Activated naive CD4-positive, alpha-beta T cell treated with anti-CD3 and anti-CD28 coated beads for 36 hours (primary cell): ENCODE measurements at regions of chr6 and their contacts with region 1.

Region 1: GRCh38 chr6:151702851-151703611 is 104.5 kb upstream of the ESR1 start:
- DNase-seq: no peak
- H3K4me3 Mint-ChIP-seq: no peak overlapping the region
- H3K27ac Mint-ChIP-seq: peak overlapping the region; percentile 12
- H3K4me1 Mint-ChIP-seq: peaks cover 45% of the 10 kb centered on the region
- H3K27me3 Mint-ChIP-seq: peaks cover 11% of the 10 kb centered on the region

Region 2: GRCh38 chr6:151681433-151682059 is 21.5 kb before region 1 on chr6:
- CTCF ChIA-PET with region 1: interaction called, 4 read pairs
- intact Hi-C with region 1: loop called (anchors 1 kb)
- DNase-seq: no peak
- H3K4me3 Mint-ChIP-seq: peak overlapping the region; percentile 5
- H3K27ac Mint-ChIP-seq: no peak overlapping the region
- H3K4me1 Mint-ChIP-seq: peaks cover 10% of the 10 kb centered on the region
- H3K27me3 Mint-ChIP-seq: peaks cover 12% of the 10 kb centered on the region

Region 3: GRCh38 chr6:151723152-151723551 is 20.1 kb after region 1 on chr6:
- CTCF ChIA-PET with region 1: interaction called, 3 read pairs
- intact Hi-C with region 1: loop called (anchors 1 kb)
- DNase-seq: peak; percentile 76
- H3K4me3 Mint-ChIP-seq: no peak overlapping the region
- H3K27ac Mint-ChIP-seq: no peak overlapping the region
- H3K4me1 Mint-ChIP-seq: peaks cover 29% of the 10 kb centered on the region
- H3K27me3 Mint-ChIP-seq: peaks cover 3% of the 10 kb centered on the region

Region 4: DNA sequence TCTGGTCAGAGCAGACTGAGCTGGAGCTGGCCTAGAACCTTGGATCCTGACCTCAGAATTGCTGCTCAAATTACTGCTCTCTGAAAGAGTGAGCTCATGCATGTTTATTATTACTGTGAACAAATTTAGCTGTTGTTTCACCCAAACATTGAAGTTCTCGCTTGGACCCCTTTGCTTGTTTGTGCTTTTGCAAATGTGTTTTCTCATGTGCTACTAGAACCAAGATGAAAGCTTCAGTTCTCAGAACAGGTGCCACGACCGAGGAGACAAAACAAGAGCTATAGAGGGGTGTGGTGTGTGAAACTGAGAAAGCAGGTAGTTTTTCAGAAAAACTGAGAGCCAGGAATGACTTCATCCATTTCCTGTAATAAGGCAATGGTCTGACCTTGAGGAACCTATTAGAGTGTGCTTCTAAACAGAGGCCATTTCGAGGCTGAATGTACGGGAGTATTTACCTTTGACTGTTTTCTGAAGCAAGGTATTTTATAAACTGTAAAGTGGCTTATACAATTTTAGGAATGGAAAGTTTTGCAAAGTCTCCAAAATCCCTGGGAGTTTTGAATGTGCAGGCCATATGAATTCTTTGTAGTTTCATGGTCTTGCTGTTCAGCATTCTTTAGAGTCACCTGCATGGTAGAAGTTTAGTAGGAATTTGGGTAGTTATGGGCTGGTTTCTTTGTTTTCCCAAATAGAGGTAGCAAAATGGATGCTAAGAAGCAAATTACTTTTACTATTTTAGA is 54.6 kb after region 1 on chr6:
- CTCF ChIA-PET with region 1: interaction called, 3 read pairs
- intact Hi-C with region 1: loop called (anchors 1 kb)
- DNase-seq: peak; percentile 67
- H3K4me3 Mint-ChIP-seq: peak overlapping the region; percentile 36
- H3K27ac Mint-ChIP-seq: peak overlapping the region; percentile 80
- H3K4me1 Mint-ChIP-seq: peaks cover 37% of the 10 kb centered on the region
- H3K27me3 Mint-ChIP-seq: no peaks in the 10 kb centered on the region

Region 5: DNA sequence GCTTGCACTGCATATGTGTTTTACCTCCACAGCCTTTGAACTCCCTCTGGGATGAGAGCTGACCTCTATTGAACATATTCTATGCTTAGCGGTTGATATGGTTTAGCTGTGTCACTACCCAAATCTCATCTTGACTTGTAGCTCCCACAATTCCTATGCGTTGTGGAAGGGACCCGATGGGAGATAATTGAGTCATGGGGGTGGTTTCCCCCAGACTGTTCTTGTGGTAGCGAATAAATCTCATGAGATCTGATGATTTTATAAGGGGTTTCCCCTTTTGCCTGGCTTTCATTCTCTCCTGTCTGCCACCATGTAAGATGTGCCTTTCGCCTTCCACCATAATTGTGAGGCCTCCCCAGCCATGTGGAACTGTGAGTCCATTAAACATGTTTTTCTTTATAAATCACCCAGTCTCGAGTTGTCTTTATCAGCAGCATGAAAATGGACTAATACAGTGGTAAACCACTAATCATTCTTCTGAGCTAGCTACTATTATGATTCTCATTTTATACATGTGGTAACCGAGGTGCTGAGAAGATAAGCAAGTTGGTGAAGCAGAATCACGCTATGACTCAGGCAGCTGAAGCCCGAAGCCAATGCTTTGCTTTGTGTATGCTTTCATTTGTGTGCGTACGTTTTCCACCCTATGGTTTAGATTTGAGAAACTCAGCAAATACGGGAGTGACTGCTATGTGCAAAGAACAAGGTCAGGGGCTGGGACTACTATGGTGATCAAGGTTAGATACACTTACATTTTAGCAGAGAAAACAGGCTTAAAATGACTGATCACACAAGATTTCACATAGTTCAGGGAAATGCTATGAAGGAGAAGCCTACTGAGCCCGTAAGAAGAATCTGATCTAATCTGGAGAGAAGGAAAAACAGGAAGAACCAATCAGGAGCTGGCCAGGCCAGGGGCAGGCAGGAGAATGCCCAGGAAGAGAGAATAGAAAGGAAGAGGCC is 468.0 kb after region 1 on chr6:
- CTCF ChIA-PET with region 1: no interaction called
- intact Hi-C with region 1: loop called (anchors 1 kb)
- DNase-seq: peak; percentile 82
- H3K4me3 Mint-ChIP-seq: peak overlapping the region; percentile 60
- H3K27ac Mint-ChIP-seq: peak overlapping the region; percentile 89
- H3K4me1 Mint-ChIP-seq: peaks cover 50% of the 10 kb centered on the region
- H3K27me3 Mint-ChIP-seq: no peaks in the 10 kb centered on the region

Region 6: GRCh38 chr6:152982768-152983636 is 1280.0 kb after region 1 on chr6 and contains the start of gene FBXO5:
- CTCF ChIA-PET with region 1: no interaction called
- intact Hi-C with region 1: loop called (anchors 5 kb)
- DNase-seq: peak; percentile 97
- H3K4me3 Mint-ChIP-seq: peak within 1 kb of the TSS; percentile 99
- H3K27ac Mint-ChIP-seq: peak within 1 kb of the TSS; percentile 100
- H3K4me1 Mint-ChIP-seq: peaks cover 44% of the 10 kb centered on the region
- H3K27me3 Mint-ChIP-seq: no peaks in the 10 kb centered on the region
- total RNA-seq, gene FBXO5: 61.4 to 62.3 TPM